HEK293T (cell line): ENCODE measurements at regions of chr1 and their contacts with region 1.

Region 1: GRCh38 chr1:61077676-61078541 is 4.5 kb upstream of the NFIA start:
- DNase-seq: peak; percentile 95

Region 2: GRCh38 chr1:61049850-61050540 is 27.9 kb before region 1 on chr1:
- CTCF ChIA-PET with region 1: interaction called, 7 read pairs
- POLR2A ChIA-PET with region 1: interaction called, 13 read pairs
- DNase-seq: peak; percentile 96

Region 3: DNA sequence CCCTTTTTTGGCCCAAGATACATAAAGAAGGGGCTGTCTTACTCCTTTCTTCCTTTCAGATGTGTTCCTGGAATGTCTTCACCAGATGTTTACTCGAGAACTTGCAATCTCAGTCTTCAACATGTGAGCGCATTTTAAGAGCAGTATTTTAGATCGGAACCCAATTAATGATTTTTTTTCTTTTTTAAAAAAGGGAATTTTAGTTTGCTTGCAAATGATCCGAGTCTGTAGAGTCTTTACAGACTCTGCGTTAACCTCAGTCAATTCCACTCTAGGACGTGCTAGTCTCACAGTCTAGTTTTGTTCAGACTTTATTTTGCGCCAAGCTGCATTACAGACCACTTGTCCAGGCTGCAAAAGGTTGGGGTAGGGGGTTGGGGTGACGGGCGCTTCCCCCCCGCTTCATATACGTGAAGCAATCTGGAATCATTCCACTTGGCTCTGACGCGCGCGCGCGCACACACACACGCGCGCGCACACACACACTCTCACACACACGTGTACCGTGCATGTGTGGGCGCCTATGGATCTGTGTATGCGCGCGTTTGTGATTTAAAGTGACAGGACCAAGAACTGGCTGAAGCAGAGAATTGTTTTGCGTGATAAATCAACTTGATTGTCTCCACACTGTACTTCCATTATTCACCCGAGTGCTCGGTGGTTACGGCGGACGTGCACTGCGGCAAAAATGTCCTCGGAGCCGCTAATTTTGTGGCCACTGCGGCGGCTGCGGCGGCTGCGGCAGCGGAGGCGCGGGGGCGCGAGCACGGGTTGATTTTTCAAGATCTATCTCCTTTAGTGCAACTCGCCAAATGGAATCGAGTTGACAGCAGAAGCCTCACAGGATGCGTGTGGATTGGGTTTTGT is 21.1 kb before region 1 on chr1:
- CTCF ChIA-PET with region 1: interaction called, 3 read pairs
- POLR2A ChIA-PET with region 1: interaction called, 12 read pairs
- DNase-seq: no peak